Mammary epithelial cell (primary cell): ENCODE measurements at regions of chr2 and their contacts with region 1.

Region 1: GRCh38 chr2:65064728-65065552 is 8.7 kb downstream of the CEP68 start:
- DNase-seq: peak; percentile 77
- H3K4me3 ChIP-seq: no peak overlapping the region
- H3K27ac ChIP-seq: peak overlapping the region; percentile 42
- H3K4me1 ChIP-seq: peaks cover 50% of the 10 kb centered on the region
- H3K27me3 ChIP-seq: no peaks in the 10 kb centered on the region
- CTCF ChIP-seq: peak; percentile 75 to 77

Region 2: DNA sequence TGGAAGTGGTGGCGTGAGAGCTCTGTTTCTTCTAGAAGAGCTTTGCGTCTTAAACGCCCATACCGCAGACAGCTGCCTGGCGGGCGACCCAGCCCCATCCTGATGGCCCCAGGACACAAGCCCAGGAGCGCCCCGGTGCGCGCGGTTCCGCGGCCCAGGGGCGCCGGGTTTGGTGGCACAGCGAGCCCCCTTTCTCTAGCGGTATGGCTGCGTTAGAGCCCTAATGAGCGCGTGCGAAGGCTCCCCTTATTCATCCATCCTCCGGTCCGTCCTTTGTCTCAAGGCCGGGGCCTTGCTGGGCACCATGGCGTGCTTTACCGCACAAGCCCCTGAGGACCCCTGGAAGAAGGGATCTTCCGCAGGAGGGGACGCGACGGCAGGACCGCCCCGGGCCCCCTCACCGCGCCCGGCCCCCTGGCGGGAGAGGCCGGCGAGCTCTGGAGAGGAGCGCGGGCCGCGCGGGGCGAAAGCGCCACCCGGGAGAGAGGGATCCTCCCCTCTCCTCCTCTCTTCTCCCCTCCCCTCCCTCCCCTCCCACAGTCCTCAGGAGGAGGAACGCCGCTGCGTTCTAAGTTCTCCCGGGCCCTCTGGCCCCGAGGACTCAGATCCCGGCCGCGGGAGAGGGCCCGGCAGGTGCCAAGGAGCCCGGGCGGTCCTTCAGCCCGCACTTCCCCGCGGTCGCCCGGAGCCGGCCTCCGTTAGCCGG is 76.4 kb before region 1 on chr2:
- CTCF ChIA-PET with region 1: interaction called, 10 read pairs
- dilution Hi-C with region 1: no loop called
- in situ Hi-C with region 1: no loop called
- intact Hi-C with region 1: no loop called
- DNase-seq: peak; percentile 83
- H3K4me3 ChIP-seq: peak overlapping the region; percentile 59 to 69 (median 63)
- H3K27ac ChIP-seq: peak overlapping the region; percentile 40
- H3K4me1 ChIP-seq: peaks cover 19% of the 10 kb centered on the region
- H3K27me3 ChIP-seq: no peaks in the 10 kb centered on the region
- CTCF ChIP-seq: peak; percentile 4 to 47

Region 3: GRCh38 chr2:65129826-65130663 is 65.1 kb after region 1 on chr2 and contains the start of gene RAB1A:
- CTCF ChIA-PET with region 1: interaction called, 12 read pairs
- dilution Hi-C with region 1: no loop called
- in situ Hi-C with region 1: no loop called
- intact Hi-C with region 1: loop called (anchors 2 kb)
- DNase-seq: peak; percentile 99
- H3K4me3 ChIP-seq: peak within 1 kb of the TSS; percentile 92 to 98 (median 93)
- H3K27ac ChIP-seq: peak within 1 kb of the TSS; percentile 92
- H3K4me1 ChIP-seq: peaks cover 6% of the 10 kb centered on the region
- H3K27me3 ChIP-seq: no peaks in the 10 kb centered on the region
- CTCF ChIP-seq: no peak
- total RNA-seq, gene RAB1A: 76.7 to 158 TPM

Region 4: GRCh38 chr2:65142515-65142914 is 77.6 kb after region 1 on chr2:
- CTCF ChIA-PET with region 1: interaction called, 3 read pairs
- dilution Hi-C with region 1: no loop called
- in situ Hi-C with region 1: no loop called
- intact Hi-C with region 1: loop called (anchors 1 kb)
- DNase-seq: peak; percentile 50
- H3K4me3 ChIP-seq: no peak overlapping the region
- H3K27ac ChIP-seq: no peak overlapping the region
- H3K4me1 ChIP-seq: peaks cover 7% of the 10 kb centered on the region
- H3K27me3 ChIP-seq: no peaks in the 10 kb centered on the region
- CTCF ChIP-seq: peak; percentile 41 to 62

Region 5: DNA sequence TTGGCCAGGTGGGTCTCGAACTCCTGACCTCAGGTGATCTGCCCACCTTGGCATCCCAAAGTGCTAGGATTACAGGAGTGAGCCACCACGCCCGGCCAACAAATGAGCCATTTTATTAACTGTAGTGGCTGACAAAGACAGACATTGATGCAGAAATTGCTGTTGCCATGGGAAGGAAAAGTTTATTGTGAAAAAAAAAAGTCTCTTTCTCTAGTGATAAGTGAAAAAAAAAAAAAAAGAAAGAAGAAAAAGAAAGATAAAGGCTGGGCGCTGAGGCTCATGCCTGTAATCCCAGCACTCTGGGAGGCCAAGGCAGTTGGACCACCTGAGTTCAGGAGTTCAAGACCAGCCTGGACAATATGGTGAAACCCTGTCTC is 104.8 kb after region 1 on chr2:
- CTCF ChIA-PET with region 1: no interaction called
- dilution Hi-C with region 1: no loop called
- in situ Hi-C with region 1: no loop called
- intact Hi-C with region 1: loop called (anchors 1 kb)
- DNase-seq: no peak
- H3K4me3 ChIP-seq: no peak overlapping the region
- H3K27ac ChIP-seq: no peak overlapping the region
- H3K4me1 ChIP-seq: no peaks in the 10 kb centered on the region
- H3K27me3 ChIP-seq: no peaks in the 10 kb centered on the region
- CTCF ChIP-seq: no peak

Region 6: DNA sequence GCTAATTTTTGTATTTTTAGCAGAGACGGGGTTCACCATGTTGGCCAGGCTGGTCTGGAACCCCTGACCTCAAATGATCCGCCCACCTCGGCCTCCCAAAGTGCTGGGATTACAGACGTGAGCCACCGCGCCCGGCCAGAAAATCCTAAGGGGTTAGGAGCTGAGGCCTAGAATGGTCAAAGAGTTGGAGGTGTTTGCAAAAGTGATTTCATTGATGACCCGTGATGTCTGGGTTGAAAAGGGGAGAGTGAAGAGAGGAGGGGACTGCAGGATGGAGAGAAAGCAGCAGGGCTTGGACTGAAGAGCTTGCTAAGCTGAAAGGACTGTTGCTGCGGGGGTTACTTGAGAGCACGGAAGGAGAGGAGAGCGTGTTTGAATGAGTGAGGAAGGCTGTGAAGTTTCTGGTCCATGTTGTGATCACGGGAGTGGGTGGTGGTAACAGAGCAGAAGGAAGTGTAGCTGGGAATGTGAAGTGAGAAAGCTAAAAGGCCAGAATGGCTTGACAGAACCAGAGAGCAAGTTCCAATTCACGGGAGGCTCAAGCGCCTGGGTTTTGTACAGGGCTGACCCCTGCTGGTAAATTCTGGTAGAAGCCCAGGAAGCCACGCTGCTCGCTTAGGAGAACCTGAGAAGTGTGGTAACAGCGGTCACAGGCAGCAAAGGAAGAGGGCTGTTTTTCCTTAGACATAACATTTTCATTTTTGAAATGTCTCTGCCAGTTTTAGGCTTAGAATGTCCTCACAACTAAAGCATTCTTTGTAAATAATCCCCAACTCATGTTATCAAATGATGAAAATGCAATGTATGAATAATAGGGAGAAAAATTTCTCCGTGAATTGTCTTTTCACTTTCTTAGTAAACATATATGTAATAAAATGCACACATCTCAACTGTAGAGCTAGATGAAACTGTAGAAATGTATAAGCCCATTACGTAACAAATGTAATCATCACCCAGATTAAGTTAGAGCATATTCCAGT is 122.2 kb after region 1 on chr2:
- CTCF ChIA-PET with region 1: interaction called, 4 read pairs
- dilution Hi-C with region 1: no loop called
- in situ Hi-C with region 1: no loop called
- intact Hi-C with region 1: loop called (anchors 1 kb)
- DNase-seq: peak; percentile 58
- H3K4me3 ChIP-seq: no peak overlapping the region
- H3K27ac ChIP-seq: no peak overlapping the region
- H3K4me1 ChIP-seq: no peaks in the 10 kb centered on the region
- H3K27me3 ChIP-seq: no peaks in the 10 kb centered on the region
- CTCF ChIP-seq: peak; percentile 74 to 86

Region 7: DNA sequence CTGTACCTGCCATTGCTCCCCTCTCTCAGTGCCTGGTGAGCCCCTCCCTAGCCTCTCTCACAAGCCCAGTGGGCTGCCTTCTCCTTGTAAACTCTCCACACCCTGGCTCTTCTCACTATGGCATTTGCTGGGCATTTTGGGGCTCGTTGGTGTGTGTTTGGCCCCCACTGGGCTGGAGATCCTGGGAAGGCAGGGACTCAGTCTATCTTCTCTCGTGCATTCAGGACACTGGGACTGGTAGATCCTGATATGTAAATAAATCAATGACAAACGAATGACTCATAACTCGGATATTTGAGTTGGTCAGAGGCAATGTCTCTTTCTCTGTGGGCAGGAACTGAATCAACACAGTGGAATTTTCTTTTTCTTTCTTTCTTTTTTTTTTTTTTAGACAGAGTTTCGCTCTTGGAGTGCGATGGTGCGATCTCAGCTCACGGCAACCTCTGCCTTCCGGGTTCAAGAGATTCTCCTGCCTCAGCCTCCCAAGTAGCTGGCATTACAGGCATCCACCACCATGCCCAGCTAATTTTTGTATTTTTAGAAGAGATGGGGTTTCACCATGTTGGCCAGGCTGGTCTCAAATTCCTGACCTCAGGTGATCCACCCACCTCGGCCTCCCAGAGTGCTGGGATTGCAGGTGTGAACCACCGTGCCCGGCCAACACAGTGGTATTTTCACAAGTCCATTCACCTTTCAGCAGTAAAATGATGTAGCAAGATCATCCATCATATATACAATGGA is 512.1 kb after region 1 on chr2:
- CTCF ChIA-PET with region 1: no interaction called
- dilution Hi-C with region 1: no loop called
- in situ Hi-C with region 1: loop called (anchors 10 to 25 kb)
- intact Hi-C with region 1: no loop called
- DNase-seq: peak; percentile 92
- H3K4me3 ChIP-seq: no peak overlapping the region
- H3K27ac ChIP-seq: peak overlapping the region; percentile 89
- H3K4me1 ChIP-seq: peaks cover 16% of the 10 kb centered on the region
- H3K27me3 ChIP-seq: no peaks in the 10 kb centered on the region
- CTCF ChIP-seq: no peak